Posterior vena cava (tissue), 2 donors: ENCODE measurements at regions of chr5 and their contacts with region 1.

Region 1: GRCh38 chr5:147140558-147140957 is 94.3 kb upstream of the STK32A start:
- DNase-seq: no peak

Region 2: DNA sequence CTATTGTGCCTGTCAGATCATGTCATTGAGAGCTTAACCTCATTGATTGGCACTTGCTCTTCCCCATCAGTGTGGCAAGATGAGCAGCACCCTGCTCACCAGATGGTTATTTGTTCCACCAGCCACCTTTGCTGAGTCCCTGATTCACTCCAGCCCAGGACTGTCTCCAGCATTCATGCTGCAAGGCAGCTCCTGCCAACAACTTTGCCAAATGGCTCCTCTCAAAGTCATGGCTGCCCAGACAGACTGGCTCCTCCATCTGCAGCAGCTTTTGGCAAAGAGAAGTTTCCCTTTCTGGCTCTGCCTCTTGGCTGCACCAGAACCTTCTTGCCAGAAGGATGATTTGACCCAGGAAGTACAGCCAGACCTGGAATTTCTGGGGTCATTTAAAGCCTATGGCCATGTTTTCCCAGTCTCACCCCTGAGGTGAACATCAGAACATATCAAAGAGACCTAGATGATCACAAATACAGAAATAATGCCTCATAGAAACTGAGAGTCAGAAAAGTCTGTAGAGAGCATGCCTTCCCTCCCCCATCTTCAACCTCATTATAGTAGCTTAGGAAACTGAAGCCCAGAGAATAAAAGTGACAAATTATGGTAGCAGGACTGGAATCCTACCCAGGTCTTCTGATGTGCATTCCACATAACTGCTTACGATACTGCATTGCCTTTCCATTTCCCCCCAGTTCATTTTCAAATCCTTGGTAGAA is 272.4 kb before region 1 on chr5:
- intact Hi-C with region 1: loop called in 1 of 2 experiments (anchors 5 kb)
- DNase-seq: no peak

Region 3: GRCh38 chr5:147321569-147321968 is 181.0 kb after region 1 on chr5:
- intact Hi-C with region 1: no loop called
- DNase-seq: no peak

Region 4: DNA sequence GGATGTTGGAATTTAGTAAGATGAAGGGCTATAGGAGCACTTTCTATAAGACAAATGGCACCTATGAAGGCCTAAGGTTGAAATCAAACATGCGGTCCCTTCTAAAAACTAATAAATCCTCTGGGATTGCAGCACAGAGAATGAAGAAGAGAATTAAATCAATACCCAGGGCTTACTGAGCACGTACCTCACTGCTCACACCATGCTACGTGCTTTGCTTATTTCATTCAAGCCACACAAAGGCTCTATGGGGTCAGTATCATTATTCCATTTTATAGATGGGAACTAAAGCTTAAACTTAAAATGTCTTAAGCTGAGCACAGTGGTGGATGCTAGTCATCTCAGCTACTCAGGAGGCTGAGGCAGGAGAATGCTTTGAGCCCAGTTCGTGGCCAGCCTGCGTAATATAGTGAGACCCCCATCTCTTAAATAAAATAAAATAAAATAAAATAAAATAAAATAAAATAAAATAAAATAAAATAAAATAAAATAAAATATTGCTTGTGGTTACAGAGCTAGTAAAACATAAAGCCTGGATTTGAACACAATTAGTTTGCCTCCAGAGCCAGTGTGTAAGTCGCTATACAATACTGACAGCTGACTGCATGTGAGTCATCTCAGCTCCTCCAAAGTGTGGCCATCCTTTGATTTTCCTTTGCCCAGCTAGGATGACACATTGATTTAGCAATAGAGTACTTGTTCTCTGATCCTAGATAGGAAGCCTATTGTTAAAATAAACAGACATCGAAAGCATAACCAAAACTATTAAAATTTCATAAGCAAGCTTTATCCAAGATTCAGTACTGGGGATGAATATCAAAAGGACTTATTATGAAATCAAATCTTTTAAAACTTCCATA is 390.2 kb after region 1 on chr5:
- intact Hi-C with region 1: no loop called
- DNase-seq: no peak

Region 5: DNA sequence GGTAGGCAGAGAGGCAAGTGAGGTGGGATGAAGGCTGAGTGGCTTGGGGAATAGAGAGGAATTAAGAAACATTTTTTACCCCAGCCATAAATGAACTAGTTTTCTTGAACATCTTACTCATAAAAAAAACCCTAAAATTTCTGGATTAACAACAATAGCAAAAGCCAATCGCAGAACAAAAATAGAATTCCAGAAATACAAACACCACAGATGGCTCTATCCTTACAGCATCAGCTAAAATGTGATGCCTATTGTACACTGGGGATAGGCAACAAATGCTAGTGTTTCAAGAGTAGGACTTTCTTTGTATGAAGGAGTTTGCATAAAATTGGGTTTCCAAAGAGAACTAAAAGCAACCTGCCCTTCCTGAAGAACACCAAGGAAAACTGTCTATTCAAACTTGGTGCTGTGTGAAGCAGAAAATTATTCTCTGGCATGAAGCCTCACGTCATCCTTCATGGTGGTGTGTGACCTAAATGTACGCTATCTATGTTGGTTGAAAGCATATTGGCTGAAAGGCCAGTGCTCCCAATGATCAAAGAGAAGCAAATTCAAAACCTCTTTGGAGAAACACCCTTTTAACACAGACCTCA is 559.0 kb after region 1 on chr5:
- intact Hi-C with region 1: no loop called
- DNase-seq: no peak